Activated CD4-positive, alpha-beta T cell treated with anti-CD3 and anti-CD28 coated beads, Interleukin-2, amount 10 ng/mL, durations not matched to agents 24 days and 14 days (primary cell): ENCODE measurements at regions of chr12 and their contacts with region 1.

Region 1: GRCh38 chr12:122732170-122732569 is 1.5 kb upstream of the HCAR1 start:
- DNase-seq: peak; percentile 79
- H3K4me3 Mint-ChIP-seq: peak overlapping the region; percentile 78
- H3K27ac Mint-ChIP-seq: peak overlapping the region; percentile 86
- H3K4me1 Mint-ChIP-seq: peaks cover 62% of the 10 kb centered on the region
- H3K27me3 Mint-ChIP-seq: no peaks in the 10 kb centered on the region

Region 2: DNA sequence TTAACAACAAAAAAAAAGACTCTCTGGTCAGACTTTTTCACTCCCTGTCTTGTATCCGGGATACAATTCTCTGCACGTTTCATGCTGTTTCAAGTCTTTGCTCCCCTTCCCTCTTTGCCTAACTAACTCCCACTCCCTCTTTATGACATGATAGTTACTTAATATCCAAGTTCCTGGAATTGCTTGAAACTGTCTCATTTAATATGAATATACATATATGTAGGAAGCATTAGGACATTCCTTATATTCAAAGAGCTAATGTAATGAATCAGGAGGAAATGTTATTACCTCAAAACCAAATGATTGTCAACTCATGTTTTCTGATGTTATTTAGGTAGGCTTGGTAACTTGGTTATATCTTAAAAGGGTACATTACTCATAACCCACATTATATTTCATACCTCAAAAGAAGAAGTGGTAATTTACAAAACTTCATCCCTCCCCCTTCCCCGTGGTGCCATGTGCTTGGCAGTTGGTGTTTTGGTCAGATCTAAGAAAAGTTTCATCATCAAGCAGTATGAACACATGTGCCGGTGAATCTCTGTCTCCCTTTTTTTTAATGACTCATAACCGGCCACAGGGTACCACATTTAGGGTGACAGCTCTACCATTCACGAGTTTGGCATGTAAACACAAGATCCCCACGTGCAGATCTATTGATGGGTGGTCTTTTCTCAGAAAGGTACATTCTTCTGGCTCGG is 85.5 kb before region 1 on chr12:
- intact Hi-C with region 1: loop called (anchors 2 kb)
- DNase-seq: peak; percentile 79
- H3K4me3 Mint-ChIP-seq: peak overlapping the region; percentile 73
- H3K27ac Mint-ChIP-seq: peak overlapping the region; percentile 79
- H3K4me1 Mint-ChIP-seq: peaks cover 17% of the 10 kb centered on the region
- H3K27me3 Mint-ChIP-seq: no peaks in the 10 kb centered on the region

Region 3: DNA sequence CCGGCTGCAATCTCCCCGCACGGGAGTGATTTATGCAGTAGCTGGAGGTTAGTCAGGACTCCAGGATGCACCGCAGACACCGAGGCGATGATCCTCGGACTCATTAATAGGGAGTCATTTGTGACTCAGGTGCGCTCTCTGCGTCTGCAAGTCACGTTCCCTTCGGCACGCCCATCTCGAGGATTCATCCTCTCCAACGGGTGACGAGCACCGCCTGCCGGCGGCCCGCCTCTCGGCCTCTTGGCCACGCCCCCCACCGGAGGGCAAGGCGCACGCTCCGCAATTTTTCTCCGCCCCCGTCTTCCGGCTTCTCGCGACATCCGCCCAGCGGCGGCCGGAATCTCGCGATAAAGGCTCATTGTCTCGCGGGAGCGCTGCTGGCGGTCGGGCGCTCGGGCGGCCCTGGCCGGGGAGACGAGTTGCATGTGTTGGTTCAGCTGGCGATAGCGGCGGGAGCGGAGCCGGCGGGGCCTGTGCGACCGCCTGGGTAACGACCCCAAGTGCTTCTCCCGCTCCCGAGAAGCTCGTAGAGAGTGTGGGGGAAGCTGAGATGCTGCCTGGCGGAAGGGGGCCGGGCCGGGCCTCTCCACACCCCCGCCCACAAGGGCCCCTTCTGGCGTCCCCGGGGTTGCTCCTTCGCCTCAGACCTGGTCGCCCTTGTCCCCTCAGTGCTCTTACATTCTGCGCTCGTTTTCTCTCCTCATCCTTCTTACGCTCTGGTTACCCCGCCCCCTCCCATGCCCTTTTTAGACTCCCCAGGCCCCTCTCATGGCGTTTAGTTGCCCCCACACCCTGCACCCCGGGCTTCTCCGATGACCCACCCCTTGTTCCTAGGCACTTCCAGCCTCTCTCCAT is 20.5 kb after region 1 on chr12 and contains the start of gene DENR:
- intact Hi-C with region 1: loop called (anchors 1 kb)
- DNase-seq: peak; percentile 100
- H3K4me3 Mint-ChIP-seq: peak within 1 kb of the TSS; percentile 93
- H3K27ac Mint-ChIP-seq: peak within 1 kb of the TSS; percentile 98
- H3K4me1 Mint-ChIP-seq: peaks cover 50% of the 10 kb centered on the region
- H3K27me3 Mint-ChIP-seq: no peaks in the 10 kb centered on the region
- total RNA-seq, gene DENR: 88.7 and 89.6 TPM in 2 replicates